ENCODE measurements at regions of chr12 and their contacts with region 1.

Region 1: GRCh38 chr12:124493809-124494750 is 73.3 kb downstream of the NCOR2 start:
- DNase-seq: peak; percentile 11
- H3K4me3 Mint-ChIP-seq: peak overlapping the region; percentile 39
- H3K27ac Mint-ChIP-seq: peak overlapping the region; percentile 63
- H3K4me1 Mint-ChIP-seq: peaks cover 27% of the 10 kb centered on the region
- H3K27me3 Mint-ChIP-seq: no peaks in the 10 kb centered on the region

Region 2: DNA sequence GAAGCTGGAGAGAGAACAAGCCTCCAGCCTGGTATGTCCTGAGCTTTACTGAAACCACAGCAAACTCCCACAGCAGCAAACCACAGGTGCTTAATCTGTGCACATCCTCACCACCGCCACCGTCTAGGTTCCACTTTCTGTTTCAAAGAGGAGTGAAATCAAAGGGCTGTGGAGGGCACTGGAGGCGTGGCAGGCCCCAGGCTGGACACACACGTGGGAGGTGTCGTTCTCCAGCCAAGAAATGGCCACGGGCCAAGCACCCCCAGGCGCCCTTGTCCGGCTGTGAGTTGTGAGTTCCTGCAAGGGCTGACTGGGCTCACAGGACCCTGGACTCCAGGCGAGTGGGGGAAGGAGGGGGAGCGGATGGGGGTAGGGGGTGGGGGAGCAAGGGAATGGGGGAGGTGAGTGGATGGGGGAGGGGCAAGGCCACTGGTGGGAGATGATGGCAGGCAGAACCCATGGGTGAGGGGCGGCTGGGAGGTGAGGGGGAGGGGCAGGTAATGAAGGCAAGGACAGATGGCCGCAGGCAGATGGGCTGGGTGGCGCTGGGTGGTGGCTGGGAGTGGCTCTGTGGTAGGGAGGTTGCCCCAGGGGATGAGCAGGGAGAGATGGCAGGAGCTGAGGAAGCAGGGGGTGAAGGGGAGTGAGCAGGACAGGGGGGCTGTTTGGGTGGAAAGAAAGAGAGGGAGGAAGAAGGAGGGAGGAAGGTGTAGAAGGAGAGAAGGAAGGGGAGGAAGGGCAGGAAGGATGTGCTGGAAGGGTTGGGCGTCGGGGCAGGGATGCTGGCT is 13.4 kb before region 1 on chr12:
- intact Hi-C with region 1: loop called (anchors 1 kb)
- DNase-seq: peak; percentile 62
- H3K4me3 Mint-ChIP-seq: no peak overlapping the region
- H3K27ac Mint-ChIP-seq: peak overlapping the region; percentile 52
- H3K4me1 Mint-ChIP-seq: peaks cover 36% of the 10 kb centered on the region
- H3K27me3 Mint-ChIP-seq: peaks cover 3% of the 10 kb centered on the region

Region 3: GRCh38 chr12:124518051-124518932 is 24.2 kb after region 1 on chr12:
- intact Hi-C with region 1: no loop called
- DNase-seq: no peak
- H3K4me3 Mint-ChIP-seq: no peak overlapping the region
- H3K27ac Mint-ChIP-seq: no peak overlapping the region
- H3K4me1 Mint-ChIP-seq: peaks cover 4% of the 10 kb centered on the region
- H3K27me3 Mint-ChIP-seq: no peaks in the 10 kb centered on the region

Region 4: DNA sequence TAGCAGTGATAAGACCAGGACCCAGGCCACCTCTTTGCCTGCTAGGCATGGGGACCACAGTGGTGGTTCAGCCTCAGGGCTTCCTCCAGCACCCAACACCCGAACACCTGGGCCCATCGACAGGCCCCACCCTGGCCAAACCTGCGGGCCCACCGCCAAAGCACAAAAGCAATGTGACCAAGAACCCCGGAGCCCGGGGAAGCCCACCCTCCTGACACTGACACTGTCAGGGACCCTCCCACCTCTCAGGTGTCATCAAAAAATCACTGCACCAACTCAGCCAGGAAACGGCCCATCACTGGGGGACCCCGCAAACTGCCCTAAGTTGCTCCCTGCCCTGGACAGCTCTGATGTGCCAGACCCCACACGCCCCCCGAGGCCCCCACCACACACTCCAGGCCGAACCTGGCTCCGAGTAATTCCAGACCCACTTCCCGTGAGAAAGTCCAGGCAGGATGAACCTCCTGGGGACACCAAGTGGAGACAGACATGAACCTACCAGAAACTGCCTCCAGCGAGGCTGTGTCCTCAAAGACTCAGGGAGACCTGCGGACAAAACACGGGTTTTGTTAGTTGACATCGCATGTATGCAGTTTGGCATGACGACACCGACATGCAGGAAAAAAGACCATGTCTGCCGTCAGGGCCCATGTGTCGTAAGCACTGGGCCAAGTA is 41.1 kb after region 1 on chr12:
- intact Hi-C with region 1: no loop called
- DNase-seq: no peak
- H3K4me3 Mint-ChIP-seq: no peak overlapping the region
- H3K27ac Mint-ChIP-seq: no peak overlapping the region
- H3K4me1 Mint-ChIP-seq: peaks cover 11% of the 10 kb centered on the region
- H3K27me3 Mint-ChIP-seq: no peaks in the 10 kb centered on the region

Region 5: DNA sequence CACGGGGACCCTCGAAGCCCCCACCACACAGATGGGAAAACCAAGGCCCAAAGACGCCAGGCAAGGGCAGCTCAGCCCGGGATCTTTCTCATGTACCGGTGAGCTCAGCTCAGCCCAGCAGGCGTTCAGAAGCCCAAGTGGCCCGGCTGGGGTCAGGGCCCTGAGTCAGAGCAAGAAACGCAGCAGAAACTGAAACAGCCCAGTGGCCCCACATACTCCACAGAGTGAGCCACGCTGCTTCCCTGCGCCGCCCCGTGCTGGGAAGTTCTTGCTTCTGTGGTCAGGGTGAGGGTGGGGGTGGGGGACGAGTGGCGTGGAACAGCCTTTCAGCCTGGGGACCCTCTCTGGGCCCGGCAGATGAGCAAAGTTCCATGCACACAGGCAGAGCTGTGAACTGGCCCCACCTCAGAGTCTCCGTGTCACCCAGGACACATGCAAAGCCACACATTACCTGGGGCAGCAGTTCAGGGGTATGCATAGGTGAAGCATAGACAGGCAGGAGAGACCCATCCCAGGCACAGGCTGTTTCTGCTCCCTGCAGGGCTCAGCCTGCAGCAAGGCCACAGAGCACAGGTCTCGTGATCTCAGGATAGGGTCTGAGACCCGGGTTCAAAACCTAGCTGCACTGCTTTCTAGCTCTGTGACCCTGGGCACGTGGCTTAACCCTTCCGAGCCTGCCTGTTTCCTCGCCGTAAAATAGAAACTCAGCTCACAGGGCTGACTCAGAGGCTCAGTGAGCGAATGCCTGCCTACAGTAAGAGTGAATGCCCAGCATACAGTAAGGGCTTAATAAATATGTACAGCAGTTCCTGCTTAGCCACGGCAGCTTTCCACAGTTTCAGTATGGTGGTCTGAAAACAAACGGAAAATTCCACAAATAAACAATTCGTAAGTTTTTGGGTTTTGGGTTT is 51.7 kb after region 1 on chr12:
- intact Hi-C with region 1: loop called (anchors 1 kb)
- DNase-seq: peak; percentile 57
- H3K4me3 Mint-ChIP-seq: peak overlapping the region; percentile 26
- H3K27ac Mint-ChIP-seq: peak overlapping the region; percentile 58
- H3K4me1 Mint-ChIP-seq: peaks cover 50% of the 10 kb centered on the region
- H3K27me3 Mint-ChIP-seq: peaks cover 3% of the 10 kb centered on the region